ENCODE measurements at regions of chr10 and their contacts with region 1.

Region 1: GRCh38 chr10:30751678-30752331 is 122.3 kb upstream of the LYZL2 start:
- DNase-seq: peak; percentile 88
- ATAC-seq: peak; percentile 91

Region 2: GRCh38 chr10:30433730-30434272 is 318.0 kb before region 1 on chr10 and contains the start of gene MAP3K8:
- intact Hi-C with region 1: no loop called
- DNase-seq: peak; percentile 96
- ATAC-seq: peak; percentile 91
- total RNA-seq, gene MAP3K8: 7.3 TPM

Region 3: GRCh38 chr10:30980951-30981616 is 229.3 kb after region 1 on chr10:
- intact Hi-C with region 1: no loop called
- DNase-seq: peak; percentile 67
- ATAC-seq: peak; percentile 94

Region 4: DNA sequence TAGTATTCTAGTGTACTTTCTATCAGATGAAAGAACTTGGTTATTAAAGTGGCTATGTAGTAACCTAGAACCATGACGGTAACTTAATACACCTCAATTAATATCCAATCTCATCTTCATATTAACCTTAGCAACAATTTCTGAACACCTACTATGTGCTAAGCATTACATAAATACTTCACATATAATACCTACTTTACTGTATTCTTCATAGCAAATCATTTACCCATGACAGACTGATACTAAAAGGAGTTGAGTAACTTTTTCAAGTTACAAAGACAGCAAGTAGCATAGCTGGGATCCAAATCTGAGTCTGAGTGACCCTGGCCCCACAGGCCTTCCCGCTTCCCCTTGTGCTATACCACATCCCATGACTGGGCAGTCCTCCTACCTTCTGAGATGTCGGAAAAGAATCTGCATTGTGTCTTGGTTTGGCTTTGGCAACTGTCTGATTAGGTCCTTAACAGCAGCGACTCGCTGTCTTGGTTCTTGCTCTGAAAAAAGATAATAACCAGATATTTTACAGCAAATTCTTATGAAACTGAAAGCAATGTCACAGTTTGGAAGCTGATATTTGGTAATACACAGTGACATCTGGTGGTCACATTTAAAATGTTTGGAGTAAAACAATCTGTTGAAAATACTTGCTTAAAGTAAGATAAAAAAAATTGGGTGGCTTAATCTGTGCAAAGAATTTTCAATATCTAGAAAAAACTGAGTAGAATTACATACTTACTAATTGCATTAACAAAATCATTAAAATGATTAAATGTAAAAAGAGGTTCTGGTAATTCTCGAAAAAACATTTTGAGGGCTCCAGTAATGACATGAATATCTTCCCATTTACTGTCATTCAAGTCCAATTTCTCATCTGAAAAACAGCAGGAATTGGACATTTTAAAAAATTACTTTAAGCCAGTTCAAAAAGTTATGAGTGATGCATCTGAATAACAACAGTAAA is 1056.7 kb after region 1 on chr10:
- intact Hi-C with region 1: loop called (anchors 10 kb)
- DNase-seq: no peak
- ATAC-seq: peak; percentile 84